ENCODE measurements at regions of chr7 and their contacts with region 1.

Region 1: DNA sequence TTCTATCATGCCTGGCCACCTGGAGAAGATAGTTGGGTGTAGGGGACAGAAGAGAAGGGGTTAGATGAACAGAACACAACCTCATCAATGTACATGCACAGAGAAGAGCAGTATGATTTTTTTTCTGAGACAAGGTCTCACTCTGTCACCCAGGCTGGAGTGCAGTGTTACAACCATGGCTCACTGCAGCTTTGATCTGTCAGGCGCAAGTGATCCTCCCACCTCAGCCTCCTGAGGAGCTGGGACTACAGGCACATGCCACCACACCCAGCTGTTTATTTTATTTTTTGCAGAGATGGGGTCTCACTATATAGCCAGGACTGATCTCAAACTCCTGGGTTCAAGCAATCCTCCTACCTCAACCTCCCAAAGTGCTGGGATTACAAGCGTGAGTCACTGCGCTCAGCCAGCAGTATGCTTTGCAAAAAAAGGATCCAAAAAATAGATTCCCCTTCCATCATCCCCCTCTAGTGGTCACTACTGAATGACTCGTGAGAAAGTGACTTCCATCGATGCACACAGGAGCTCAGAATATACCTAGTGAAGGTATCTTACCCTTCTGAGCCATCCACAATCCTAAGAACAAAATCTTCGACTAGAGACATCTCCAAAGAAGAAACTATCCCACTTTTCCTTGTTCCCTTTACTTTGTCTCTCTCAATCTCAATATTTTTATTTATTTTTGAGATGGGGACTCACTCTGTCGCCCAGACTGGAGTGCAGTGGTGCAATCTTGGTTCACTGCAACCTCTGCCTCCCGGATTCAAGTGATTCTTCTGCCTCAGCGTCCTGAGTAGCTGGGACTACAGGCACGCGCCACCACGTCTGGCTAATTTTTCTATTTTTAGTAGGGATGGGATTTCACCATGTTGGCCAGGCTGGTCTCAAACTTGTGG is 21.0 kb downstream of the ZCWPW1 start:
- DNase-seq: peak; percentile 66
- H3K4me3 ChIP-seq: no peak overlapping the region
- H3K27ac ChIP-seq: no peak overlapping the region
- H3K4me1 ChIP-seq: peaks cover 14% of the 10 kb centered on the region
- H3K27me3 ChIP-seq: no peaks in the 10 kb centered on the region
- CTCF ChIP-seq: peak; percentile 64 to 65

Region 2: GRCh38 chr7:100369105-100369504 is 38.4 kb before region 1 on chr7:
- CTCF ChIA-PET with region 1: no interaction called
- dilution Hi-C with region 1: loop called (anchors 5 kb)
- in situ Hi-C with region 1: no loop called
- intact Hi-C with region 1: loop called (anchors 5 kb)
- DNase-seq: no peak
- H3K4me3 ChIP-seq: no peak overlapping the region
- H3K27ac ChIP-seq: no peak overlapping the region
- H3K4me1 ChIP-seq: peaks cover 8% of the 10 kb centered on the region
- H3K27me3 ChIP-seq: no peaks in the 10 kb centered on the region
- CTCF ChIP-seq: no peak

Measured in mammary epithelial cell (primary cell).